Heart left ventricle (tissue), 16 donors: ENCODE measurements at regions of chr11 and their contacts with region 1.

Region 1: GRCh38 chr11:44936525-44936924 is 14.2 kb downstream of the TP53I11 start:
- DNase-seq: peak; percentile 69 to 90 (median 82)
- ATAC-seq: peak; percentile 36 to 62 (median 59)
- H3K4me3 ChIP-seq: no peak overlapping the region
- H3K27ac ChIP-seq: no peak overlapping the region
- H3K4me1 ChIP-seq: peaks cover 3 to 49% (median 32%) of the 10 kb centered on the region in 12 donors
- H3K27me3 ChIP-seq: no peaks in the 10 kb centered on the region
- CTCF ChIP-seq: peak in 11 of 12 donors; percentile 89 to 98 (median 96)
- POLR2A ChIP-seq: no peak

Region 2: GRCh38 chr11:44877571-44878497 is 58.7 kb before region 1 on chr11:
- intact Hi-C with region 1: loop called in 1 of 10 experiments (anchors 10 kb)
- DNase-seq: no peak
- ATAC-seq: peak in 3 of 4 donors; percentile 10 to 58 (median 37)
- H3K4me3 ChIP-seq: no peak overlapping the region
- H3K27ac ChIP-seq: peak overlapping the region in 1 of 12 donors; percentile 3
- H3K4me1 ChIP-seq: peaks cover 0 to 24% (median 12%) of the 10 kb centered on the region in 12 donors
- H3K27me3 ChIP-seq: no peaks in the 10 kb centered on the region
- CTCF ChIP-seq: no peak
- POLR2A ChIP-seq: no peak

Region 3: DNA sequence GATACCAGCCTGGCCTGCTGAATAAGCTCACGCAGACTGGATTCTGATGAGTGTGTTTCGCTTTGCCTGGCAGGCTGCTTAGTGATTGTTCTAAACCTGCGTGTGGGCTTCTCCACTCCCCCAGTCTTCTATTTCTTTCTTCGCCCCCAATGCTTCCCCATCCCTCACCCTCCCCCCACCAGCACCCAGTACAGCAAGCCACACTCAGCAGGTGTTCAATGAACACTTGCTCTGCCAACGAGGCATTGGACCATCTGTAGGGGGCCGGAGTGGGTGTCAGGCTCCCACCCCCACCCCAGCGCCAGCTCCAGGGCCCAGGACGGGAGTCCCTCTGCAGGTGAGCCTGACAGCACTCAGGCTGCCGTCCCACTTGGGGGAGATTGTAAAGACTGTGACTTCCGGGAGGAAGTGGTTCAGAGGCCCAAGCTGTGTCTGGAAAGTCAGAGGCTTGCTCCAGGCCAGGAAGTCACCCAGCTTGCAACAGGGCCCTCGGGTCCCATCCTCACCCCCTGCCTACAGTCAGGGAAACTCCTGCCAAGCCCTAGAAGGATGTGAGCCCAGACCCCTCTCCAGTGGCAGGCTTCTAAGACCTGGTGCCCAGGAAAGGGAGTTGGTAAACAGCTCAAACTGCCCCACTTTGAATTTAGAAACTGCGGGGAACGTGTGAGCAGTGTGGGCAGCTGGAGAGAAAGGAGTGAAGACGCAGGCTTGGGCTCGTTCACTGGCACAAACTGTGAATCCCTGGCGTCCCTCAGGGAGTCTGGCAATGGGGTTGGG is 143.6 kb after region 1 on chr11:
- intact Hi-C with region 1: no loop called
- DNase-seq: peak in 3 of 5 donors; percentile 39 to 53 (median 41)
- ATAC-seq: peak in 3 of 4 donors; percentile 12 to 71 (median 58)
- H3K4me3 ChIP-seq: no peak overlapping the region
- H3K27ac ChIP-seq: peak overlapping the region in 2 of 12 donors; percentile 11 to 66
- H3K4me1 ChIP-seq: peaks cover 0 to 51% (median 6%) of the 10 kb centered on the region in 12 donors
- H3K27me3 ChIP-seq: peaks cover 0 to 5% (median 0%) of the 10 kb centered on the region in 9 donors
- CTCF ChIP-seq: no peak
- POLR2A ChIP-seq: no peak

Region 4: GRCh38 chr11:45102810-45103621 is 166.5 kb after region 1 on chr11:
- intact Hi-C with region 1: loop called (anchors 1 to 2 kb)
- DNase-seq: peak; percentile 58 to 81 (median 62)
- ATAC-seq: peak in 3 of 4 donors; percentile 62 to 81 (median 67)
- H3K4me3 ChIP-seq: no peak overlapping the region
- H3K27ac ChIP-seq: peak overlapping the region in 1 of 12 donors; percentile 66
- H3K4me1 ChIP-seq: peaks cover 0 to 25% (median 10%) of the 10 kb centered on the region in 12 donors
- H3K27me3 ChIP-seq: peaks cover 0 to 9% (median 0%) of the 10 kb centered on the region in 9 donors
- CTCF ChIP-seq: peak; percentile 85 to 99 (median 96)
- POLR2A ChIP-seq: no peak

Region 5: GRCh38 chr11:45298718-45299117 is 362.2 kb after region 1 on chr11:
- intact Hi-C with region 1: loop called in 6 of 10 experiments (anchors 5 to 10 kb)
- DNase-seq: no peak
- ATAC-seq: no peak
- H3K4me3 ChIP-seq: no peak overlapping the region
- H3K27ac ChIP-seq: no peak overlapping the region
- H3K4me1 ChIP-seq: no peaks in the 10 kb centered on the region
- H3K27me3 ChIP-seq: peaks cover 0 to 5% (median 0%) of the 10 kb centered on the region in 9 donors
- CTCF ChIP-seq: no peak
- POLR2A ChIP-seq: no peak

Region 6: DNA sequence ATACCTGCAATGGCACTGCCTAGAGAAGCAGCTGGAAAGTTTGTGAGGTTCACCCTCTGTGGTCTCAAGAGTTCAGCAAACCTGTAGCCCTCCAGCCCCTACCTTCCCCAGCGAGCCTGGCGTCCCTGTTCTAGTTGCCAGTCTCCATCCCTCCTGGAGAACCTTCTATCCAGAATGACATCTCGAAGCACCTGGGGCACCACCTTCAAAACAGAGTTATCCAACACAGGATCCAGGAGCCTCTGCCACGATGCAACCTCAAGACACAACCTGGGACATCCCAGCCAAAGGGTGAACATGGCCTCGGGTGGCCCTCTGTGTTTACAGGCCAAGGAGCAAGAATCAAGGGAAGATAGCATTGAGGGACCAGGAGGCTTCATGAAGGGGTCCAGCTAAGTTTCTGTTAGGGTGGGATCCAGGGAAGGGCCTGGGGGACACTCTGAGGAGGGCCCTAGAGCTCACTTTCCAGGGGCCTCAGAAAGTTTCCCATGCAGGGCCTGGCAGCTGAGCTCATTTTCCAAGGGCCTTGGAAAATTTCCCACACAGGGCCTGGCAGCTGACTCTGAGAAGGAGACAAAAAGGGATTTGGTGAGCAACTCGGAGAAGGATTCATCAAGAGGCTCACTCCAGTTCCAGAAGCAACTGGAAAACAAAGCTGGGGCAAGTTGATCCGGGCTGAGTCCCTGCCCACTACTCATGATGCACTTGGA is 386.5 kb after region 1 on chr11:
- intact Hi-C with region 1: loop called in 1 of 10 experiments (anchors 10 kb)
- DNase-seq: no peak
- ATAC-seq: peak in 3 of 4 donors; percentile 20 to 56 (median 41)
- H3K4me3 ChIP-seq: no peak overlapping the region
- H3K27ac ChIP-seq: no peak overlapping the region
- H3K4me1 ChIP-seq: peaks cover 0 to 15% (median 0%) of the 10 kb centered on the region in 12 donors
- H3K27me3 ChIP-seq: peaks cover 0 to 4% (median 0%) of the 10 kb centered on the region in 9 donors
- CTCF ChIP-seq: no peak
- POLR2A ChIP-seq: no peak

Region 7: GRCh38 chr11:45332276-45332934 is 395.9 kb after region 1 on chr11:
- intact Hi-C with region 1: loop called in 7 of 10 experiments (anchors 5 to 10 kb)
- DNase-seq: peak in 1 of 5 donors; percentile 38
- ATAC-seq: peak; percentile 57 to 70 (median 69)
- H3K4me3 ChIP-seq: peak overlapping the region in 9 of 12 donors; percentile 1 to 44 (median 35)
- H3K27ac ChIP-seq: peak overlapping the region; percentile 55 to 80 (median 73)
- H3K4me1 ChIP-seq: peaks cover 0 to 22% (median 5%) of the 10 kb centered on the region in 12 donors
- H3K27me3 ChIP-seq: no peaks in the 10 kb centered on the region
- CTCF ChIP-seq: peak; percentile 74 to 93 (median 88)
- POLR2A ChIP-seq: no peak

Region 8: DNA sequence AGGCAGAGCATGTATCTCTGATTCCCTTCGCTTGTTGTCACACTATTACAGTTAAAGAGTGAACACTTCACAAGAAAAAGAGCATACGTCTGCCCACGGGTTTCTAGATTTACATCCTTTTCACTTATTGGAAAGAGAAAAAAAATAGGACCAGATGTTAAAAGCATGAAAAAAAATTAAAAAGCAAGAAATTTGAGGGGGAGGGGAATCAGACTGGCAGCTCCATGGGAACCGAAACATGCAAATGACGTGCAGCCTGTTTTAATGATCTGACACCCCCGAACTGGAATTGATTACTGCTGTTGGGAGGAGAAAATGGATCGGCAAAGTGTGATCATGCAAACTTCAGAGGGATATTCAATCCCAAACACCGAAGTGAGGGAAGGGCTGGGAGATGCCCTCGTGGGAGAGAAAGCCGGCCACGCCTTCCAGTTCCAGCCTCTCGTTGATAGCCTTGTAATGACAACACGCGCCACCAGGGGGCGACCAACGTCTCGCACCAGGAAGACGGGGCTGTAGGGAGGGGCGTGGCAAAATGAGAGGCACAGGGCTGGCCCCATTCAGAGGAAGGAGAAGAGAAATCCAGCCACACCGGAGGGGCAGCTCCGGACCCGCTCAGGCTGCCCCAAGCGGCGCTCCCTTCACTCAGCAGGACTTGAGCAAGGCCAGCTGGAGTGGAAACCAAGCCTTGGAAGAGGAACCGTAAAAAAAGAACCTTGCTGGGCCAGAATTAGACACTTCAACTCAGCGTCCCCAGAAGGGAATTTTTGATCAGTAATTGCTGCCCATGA is 403.4 kb after region 1 on chr11:
- intact Hi-C with region 1: loop called in 5 of 10 experiments (anchors 10 kb)
- DNase-seq: peak; percentile 91 to 96 (median 96)
- ATAC-seq: peak; percentile 85 to 96 (median 94)
- H3K4me3 ChIP-seq: peak overlapping the region in 9 of 12 donors; percentile 7 to 35 (median 18)
- H3K27ac ChIP-seq: peak overlapping the region in 4 of 12 donors; percentile 13 to 39 (median 24)
- H3K4me1 ChIP-seq: peaks cover 0 to 10% (median 4%) of the 10 kb centered on the region in 12 donors
- H3K27me3 ChIP-seq: peaks cover 0 to 9% (median 0%) of the 10 kb centered on the region in 9 donors
- CTCF ChIP-seq: peak; percentile 83 to 96 (median 94)
- POLR2A ChIP-seq: peak in 1 of 2 donors; percentile 14